Naive thymus-derived CD4-positive, alpha-beta T cell (primary cell): ENCODE measurements at regions of chr12 and their contacts with region 1.

Region 1: GRCh38 chr12:8949342-8950220 is at the start of gene M6PR:
- DNase-seq: peak; percentile 76 to 91 (median 89)
- ATAC-seq: peak; percentile 80
- H3K4me3 ChIP-seq: peak within 1 kb of the TSS; percentile 93
- H3K4me3 Mint-ChIP-seq: peak within 1 kb of the TSS; percentile 83 to 99 (median 95)
- H3K27ac ChIP-seq: peak within 1 kb of the TSS; percentile 92
- H3K27ac Mint-ChIP-seq: peak within 1 kb of the TSS; percentile 89 to 99 (median 96)
- H3K4me1 ChIP-seq: peaks cover 41 to 46% of the 10 kb centered on the region in 2 donors
- H3K4me1 Mint-ChIP-seq: peaks cover 47 to 73% (median 70%) of the 10 kb centered on the region in 7 donors
- H3K27me3 ChIP-seq: no peaks in the 10 kb centered on the region
- H3K27me3 Mint-ChIP-seq: no peaks in the 10 kb centered on the region
- total RNA-seq, gene M6PR: 123 to 195 (median 176) TPM

Region 2: GRCh38 chr12:8644345-8645248 is 305.0 kb before region 1 on chr12:
- CTCF ChIA-PET with region 1: no interaction called
- POLR2A ChIA-PET with region 1: interaction called, 3 read pairs
- intact Hi-C with region 1: loop called in 1 of 2 experiments (anchors 5 kb)
- DNase-seq: peak in 7 of 9 donors; percentile 11 to 51 (median 31)
- ATAC-seq: peak; percentile 84
- H3K4me3 ChIP-seq: peak overlapping the region; percentile 34
- H3K4me3 Mint-ChIP-seq: peak overlapping the region; percentile 49 to 88 (median 74)
- H3K27ac ChIP-seq: peak overlapping the region; percentile 61
- H3K27ac Mint-ChIP-seq: peak overlapping the region; percentile 90 to 95 (median 94)
- H3K4me1 ChIP-seq: peaks cover 22 to 33% of the 10 kb centered on the region in 2 donors
- H3K4me1 Mint-ChIP-seq: peaks cover 15 to 45% (median 26%) of the 10 kb centered on the region in 7 donors
- H3K27me3 ChIP-seq: no peaks in the 10 kb centered on the region
- H3K27me3 Mint-ChIP-seq: peaks cover 0 to 67% (median 0%) of the 10 kb centered on the region in 5 donors

Region 3: DNA sequence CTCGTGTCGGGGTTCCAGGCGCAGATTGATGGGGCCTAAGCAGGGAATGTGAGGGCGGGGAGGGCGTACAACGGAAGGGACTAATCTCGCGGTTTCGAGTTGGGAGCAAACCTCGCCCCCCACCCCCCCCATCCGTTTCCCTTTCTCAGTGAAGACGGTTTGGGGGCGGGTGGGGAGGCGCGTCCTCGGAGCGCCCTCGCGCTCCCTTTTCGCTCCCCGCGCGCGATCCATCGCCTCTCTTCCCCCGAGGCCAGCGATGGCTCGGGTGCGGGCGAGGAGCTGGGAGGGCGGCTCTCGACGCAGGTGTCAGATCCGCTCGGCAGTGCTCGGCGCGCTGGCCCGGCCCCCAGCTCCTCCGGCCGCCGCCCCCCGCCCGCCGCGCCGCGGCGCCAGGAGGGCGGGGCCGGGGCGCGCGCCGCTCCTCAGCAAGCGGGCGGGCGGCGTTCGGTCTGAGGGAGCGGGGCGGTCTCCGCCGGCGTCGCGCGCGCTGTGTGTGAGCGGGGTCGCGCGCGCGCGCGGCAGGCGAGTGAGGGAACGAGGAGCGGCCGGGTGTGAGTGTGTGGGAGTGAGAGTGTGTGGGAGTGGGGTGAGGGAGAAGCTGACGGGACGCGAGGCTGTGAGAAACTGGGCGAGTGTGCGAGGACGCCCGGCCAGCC is 252.0 kb before region 1 on chr12 and contains the start of gene RIMKLB:
- CTCF ChIA-PET with region 1: no interaction called
- POLR2A ChIA-PET with region 1: interaction called, 5 read pairs
- intact Hi-C with region 1: loop called (anchors 1 to 2 kb)
- DNase-seq: peak; percentile 59 to 75 (median 72)
- ATAC-seq: peak; percentile 93
- H3K4me3 ChIP-seq: peak within 1 kb of the TSS; percentile 79
- H3K4me3 Mint-ChIP-seq: peak within 1 kb of the TSS; percentile 89 to 95 (median 93)
- H3K27ac ChIP-seq: peak within 1 kb of the TSS; percentile 79
- H3K27ac Mint-ChIP-seq: peak within 1 kb of the TSS; percentile 65 to 94 (median 90)
- H3K4me1 ChIP-seq: peaks cover 0 to 17% of the 10 kb centered on the region in 2 donors
- H3K4me1 Mint-ChIP-seq: peaks cover 11 to 44% (median 42%) of the 10 kb centered on the region in 7 donors
- H3K27me3 ChIP-seq: no peaks in the 10 kb centered on the region
- H3K27me3 Mint-ChIP-seq: peaks cover 0 to 64% (median 0%) of the 10 kb centered on the region in 5 donors
- total RNA-seq, gene RIMKLB: 1.8 to 31.3 (median 18.2) TPM

Region 4: DNA sequence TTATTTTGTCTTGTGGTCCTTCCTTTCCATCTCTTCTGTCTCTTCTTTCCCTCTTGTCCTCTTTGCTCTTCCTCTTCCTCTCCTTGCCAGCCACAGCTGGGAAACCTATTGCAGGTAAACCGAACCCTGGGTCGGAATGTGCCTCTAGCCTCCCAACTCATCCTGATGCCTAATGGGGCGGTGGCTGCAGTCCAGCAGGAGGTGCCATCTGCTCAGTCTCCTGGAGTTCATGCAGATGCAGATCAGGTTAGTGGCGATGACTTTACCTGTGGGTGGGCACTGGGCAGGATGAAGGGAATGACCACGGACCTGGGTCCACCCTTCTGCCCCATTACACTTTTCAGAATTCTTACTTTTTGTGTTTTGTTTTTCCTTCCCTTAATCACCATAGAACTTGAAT is 27.0 kb before region 1 on chr12:
- CTCF ChIA-PET with region 1: no interaction called
- POLR2A ChIA-PET with region 1: interaction called, 3 read pairs
- intact Hi-C with region 1: loop called in 1 of 2 experiments (anchors 2 kb)
- DNase-seq: no peak
- ATAC-seq: no peak
- H3K4me3 ChIP-seq: no peak overlapping the region
- H3K4me3 Mint-ChIP-seq: no peak overlapping the region
- H3K27ac ChIP-seq: no peak overlapping the region
- H3K27ac Mint-ChIP-seq: peak overlapping the region in 1 of 9 donors; percentile 28
- H3K4me1 ChIP-seq: no peaks in the 10 kb centered on the region
- H3K4me1 Mint-ChIP-seq: peaks cover 0 to 4% (median 0%) of the 10 kb centered on the region in 7 donors
- H3K27me3 ChIP-seq: no peaks in the 10 kb centered on the region
- H3K27me3 Mint-ChIP-seq: no peaks in the 10 kb centered on the region

Region 5: GRCh38 chr12:8996682-8997360 is 47.2 kb after region 1 on chr12:
- CTCF ChIA-PET with region 1: interaction called, 14 read pairs
- POLR2A ChIA-PET with region 1: interaction called, 4 read pairs
- intact Hi-C with region 1: loop called in 1 of 2 experiments (anchors 1 kb)
- DNase-seq: peak in 1 of 9 donors; percentile 28
- ATAC-seq: peak; percentile 65
- H3K4me3 ChIP-seq: peak overlapping the region; percentile 25
- H3K4me3 Mint-ChIP-seq: peak overlapping the region in 7 of 10 donors; percentile 11 to 77 (median 27)
- H3K27ac ChIP-seq: no peak overlapping the region
- H3K27ac Mint-ChIP-seq: peak overlapping the region in 8 of 9 donors; percentile 1 to 87 (median 60)
- H3K4me1 ChIP-seq: peaks cover 35 to 44% of the 10 kb centered on the region in 2 donors
- H3K4me1 Mint-ChIP-seq: peaks cover 21 to 81% (median 62%) of the 10 kb centered on the region in 7 donors
- H3K27me3 ChIP-seq: no peaks in the 10 kb centered on the region
- H3K27me3 Mint-ChIP-seq: peaks cover 0 to 3% (median 0%) of the 10 kb centered on the region in 5 donors

Region 6: DNA sequence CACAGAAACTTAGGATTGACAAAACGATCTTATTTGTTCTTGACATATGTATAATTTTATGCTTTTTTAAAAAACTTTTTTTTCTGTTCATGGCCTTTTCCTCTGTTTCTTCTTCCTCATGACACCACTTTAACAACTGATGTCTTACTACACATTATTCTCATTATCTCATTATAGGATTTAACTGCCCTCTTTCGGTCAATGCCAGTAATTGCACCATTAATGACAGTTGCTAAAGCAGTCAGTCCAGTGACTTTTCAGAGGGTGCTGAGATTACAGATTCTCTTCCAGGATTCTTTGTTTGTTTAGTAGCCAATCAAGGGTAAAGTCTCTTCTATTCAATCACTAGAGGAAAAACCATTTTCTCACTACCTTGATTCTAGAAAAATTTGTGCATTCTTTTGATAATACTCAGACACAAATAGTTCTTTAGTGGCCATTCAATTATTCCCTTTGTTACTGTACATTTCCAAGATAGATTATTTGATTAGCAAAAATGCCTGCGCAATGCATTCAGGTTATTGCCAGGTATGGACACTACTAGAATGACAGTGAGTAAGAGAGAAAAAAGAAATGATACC is 89.9 kb after region 1 on chr12:
- CTCF ChIA-PET with region 1: interaction called, 287 read pairs
- POLR2A ChIA-PET with region 1: interaction called, 105 read pairs
- intact Hi-C with region 1: loop called (anchors 1 kb)
- DNase-seq: peak in 7 of 9 donors; percentile 37 to 77 (median 67)
- ATAC-seq: peak; percentile 93
- H3K4me3 ChIP-seq: no peak overlapping the region
- H3K4me3 Mint-ChIP-seq: peak overlapping the region in 7 of 10 donors; percentile 3 to 68 (median 47)
- H3K27ac ChIP-seq: peak overlapping the region; percentile 2
- H3K27ac Mint-ChIP-seq: peak overlapping the region in 8 of 9 donors; percentile 59 to 78 (median 70)
- H3K4me1 ChIP-seq: peaks cover 33 to 40% of the 10 kb centered on the region in 2 donors
- H3K4me1 Mint-ChIP-seq: peaks cover 19 to 61% (median 50%) of the 10 kb centered on the region in 7 donors
- H3K27me3 ChIP-seq: no peaks in the 10 kb centered on the region
- H3K27me3 Mint-ChIP-seq: peaks cover 0 to 19% (median 0%) of the 10 kb centered on the region in 5 donors

Region 7: DNA sequence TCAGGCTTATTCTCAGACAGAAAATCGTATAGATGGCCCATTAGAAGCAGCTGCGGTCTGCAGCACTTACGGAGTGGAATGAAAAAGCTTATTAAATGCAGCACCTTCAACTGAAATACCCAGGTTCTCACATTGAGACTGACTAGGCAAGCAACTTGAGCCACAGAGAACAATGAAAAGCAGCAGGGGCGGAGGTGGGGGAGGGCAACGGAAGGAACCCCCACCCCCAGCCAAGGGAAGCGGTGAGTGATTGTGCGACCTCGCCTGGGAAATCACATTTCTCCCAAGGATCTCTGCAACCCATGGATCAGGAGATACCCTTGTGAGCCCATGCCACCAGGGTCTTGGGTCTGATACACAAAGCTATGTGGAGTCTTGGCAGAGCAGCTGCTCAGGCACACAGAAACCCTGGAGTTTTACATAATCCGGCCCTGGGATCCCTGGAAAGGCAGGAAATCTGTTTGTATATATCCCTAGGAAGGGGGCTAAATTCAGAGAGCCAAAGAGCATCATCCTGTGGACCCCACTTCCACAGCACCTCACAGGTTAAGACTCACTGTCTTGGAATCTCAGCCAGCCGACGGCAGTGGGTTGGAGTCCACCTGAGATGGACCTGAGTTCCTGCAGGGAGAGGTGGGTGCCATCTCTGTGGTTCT is 220.5 kb after region 1 on chr12:
- CTCF ChIA-PET with region 1: no interaction called
- POLR2A ChIA-PET with region 1: no interaction called
- intact Hi-C with region 1: no loop called
- DNase-seq: no peak
- ATAC-seq: no peak
- H3K4me3 ChIP-seq: no peak overlapping the region
- H3K4me3 Mint-ChIP-seq: no peak overlapping the region
- H3K27ac ChIP-seq: no peak overlapping the region
- H3K27ac Mint-ChIP-seq: no peak overlapping the region
- H3K4me1 ChIP-seq: no peaks in the 10 kb centered on the region
- H3K4me1 Mint-ChIP-seq: no peaks in the 10 kb centered on the region
- H3K27me3 ChIP-seq: no peaks in the 10 kb centered on the region
- H3K27me3 Mint-ChIP-seq: peaks cover 0 to 5% (median 0%) of the 10 kb centered on the region in 5 donors